ENCODE measurements at regions of chr11 and their contacts with region 1.

Region 1: GRCh38 chr11:9861860-9862725 is 198.2 kb downstream of the SWAP70 start:
- DNase-seq: peak; percentile 74
- H3K4me3 ChIP-seq: no peak overlapping the region
- H3K27ac ChIP-seq: no peak overlapping the region
- H3K4me1 ChIP-seq: peaks cover 40% of the 10 kb centered on the region
- H3K27me3 ChIP-seq: no peaks in the 10 kb centered on the region
- CTCF ChIP-seq: peak; percentile 66 to 74
- POLR2A ChIP-seq: no peak

Region 2: DNA sequence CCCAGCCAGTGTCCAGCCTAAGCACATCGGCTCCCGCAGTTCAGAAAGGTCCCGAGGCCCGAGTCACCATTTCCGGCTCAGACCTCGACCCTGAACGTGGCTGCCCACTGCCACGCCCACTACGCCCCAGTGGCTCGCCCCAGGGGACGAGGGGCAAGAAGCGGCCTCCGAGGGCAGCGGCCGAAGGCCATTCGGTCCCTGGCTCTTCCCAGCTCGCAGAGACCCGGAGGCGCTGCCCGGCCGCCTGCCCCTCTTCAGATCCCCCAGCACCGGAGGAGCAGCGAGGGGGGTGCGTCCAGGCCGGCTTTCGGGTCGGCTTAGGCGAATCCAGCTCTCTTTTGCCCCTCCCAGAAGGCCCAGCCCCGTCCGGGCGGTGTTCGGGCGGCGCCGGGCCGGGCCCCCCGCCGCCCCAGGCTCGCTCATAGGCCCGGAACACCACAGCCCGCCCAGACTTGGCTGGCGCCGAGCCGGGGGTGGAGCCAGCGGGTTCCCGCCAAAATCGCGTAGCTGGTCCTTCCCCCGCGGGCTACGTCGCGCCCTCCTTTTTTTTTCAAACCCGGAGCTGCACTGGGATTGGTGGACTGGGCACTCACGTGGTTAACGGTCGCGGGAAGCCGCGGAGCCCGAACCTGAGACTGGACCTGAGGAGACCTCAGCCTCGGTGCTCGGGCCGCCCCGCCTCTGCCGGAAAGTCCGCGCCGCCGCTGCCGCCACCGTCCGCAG is 288.9 kb before region 1 on chr11 and contains the start of gene WEE1:
- CTCF ChIA-PET with region 1: no interaction called
- POLR2A ChIA-PET with region 1: no interaction called
- dilution Hi-C with region 1: no loop called
- intact Hi-C with region 1: loop called (anchors 10 kb)
- DNase-seq: peak; percentile 99
- H3K4me3 ChIP-seq: peak within 1 kb of the TSS; percentile 56 to 97 (median 63)
- H3K27ac ChIP-seq: peak within 1 kb of the TSS; percentile 83
- H3K4me1 ChIP-seq: peaks cover 34% of the 10 kb centered on the region
- H3K27me3 ChIP-seq: no peaks in the 10 kb centered on the region
- CTCF ChIP-seq: no peak
- POLR2A ChIP-seq: peak; percentile 50
- total RNA-seq, gene WEE1: 42.8 and 47.0 TPM in 2 replicates

Region 3: GRCh38 chr11:9875399-9875798 is 13.3 kb after region 1 on chr11:
- CTCF ChIA-PET with region 1: interaction called, 13 read pairs
- POLR2A ChIA-PET with region 1: no interaction called
- dilution Hi-C with region 1: no loop called
- intact Hi-C with region 1: no loop called
- DNase-seq: no peak
- H3K4me3 ChIP-seq: no peak overlapping the region
- H3K27ac ChIP-seq: no peak overlapping the region
- H3K4me1 ChIP-seq: no peaks in the 10 kb centered on the region
- H3K27me3 ChIP-seq: no peaks in the 10 kb centered on the region
- CTCF ChIP-seq: no peak
- POLR2A ChIP-seq: no peak

Region 4: DNA sequence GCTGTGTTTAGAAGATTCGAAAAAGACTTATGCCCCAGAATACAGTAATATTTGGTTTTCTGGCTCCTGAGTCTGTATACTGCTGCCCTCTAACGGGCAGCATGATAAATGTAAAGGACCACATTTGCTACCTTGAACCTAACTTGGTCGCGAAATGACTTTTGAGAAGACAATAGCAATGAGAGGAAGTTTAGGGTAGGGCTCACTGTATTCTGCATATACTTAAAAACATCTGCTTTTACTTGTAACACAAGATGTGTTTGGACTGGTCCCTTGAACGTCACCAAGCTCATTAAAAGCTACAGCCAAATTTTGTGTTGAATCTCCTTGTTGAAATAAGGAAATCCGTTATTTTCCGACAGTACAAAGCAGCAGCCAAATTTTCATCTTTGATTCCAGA is 110.9 kb after region 1 on chr11:
- CTCF ChIA-PET with region 1: interaction called, 30 read pairs
- POLR2A ChIA-PET with region 1: no interaction called
- dilution Hi-C with region 1: no loop called
- intact Hi-C with region 1: loop called (anchors 1 kb)
- DNase-seq: peak; percentile 74
- H3K4me3 ChIP-seq: no peak overlapping the region
- H3K27ac ChIP-seq: no peak overlapping the region
- H3K4me1 ChIP-seq: peaks cover 14% of the 10 kb centered on the region
- H3K27me3 ChIP-seq: no peaks in the 10 kb centered on the region
- CTCF ChIP-seq: peak; percentile 58 to 61
- POLR2A ChIP-seq: no peak

Region 5: GRCh38 chr11:10076458-10077141 is 214.5 kb after region 1 on chr11:
- CTCF ChIA-PET with region 1: interaction called, 3 read pairs
- POLR2A ChIA-PET with region 1: no interaction called
- dilution Hi-C with region 1: no loop called
- intact Hi-C with region 1: loop called (anchors 1 kb)
- DNase-seq: peak; percentile 28
- H3K4me3 ChIP-seq: no peak overlapping the region
- H3K27ac ChIP-seq: no peak overlapping the region
- H3K4me1 ChIP-seq: no peaks in the 10 kb centered on the region
- H3K27me3 ChIP-seq: no peaks in the 10 kb centered on the region
- CTCF ChIP-seq: peak; percentile 51 to 84
- POLR2A ChIP-seq: no peak

Region 6: GRCh38 chr11:10208131-10208575 is 346.1 kb after region 1 on chr11:
- CTCF ChIA-PET with region 1: no interaction called
- POLR2A ChIA-PET with region 1: no interaction called
- dilution Hi-C with region 1: no loop called
- intact Hi-C with region 1: loop called (anchors 10 kb)
- DNase-seq: peak; percentile 73
- H3K4me3 ChIP-seq: no peak overlapping the region
- H3K27ac ChIP-seq: no peak overlapping the region
- H3K4me1 ChIP-seq: no peaks in the 10 kb centered on the region
- H3K27me3 ChIP-seq: no peaks in the 10 kb centered on the region
- CTCF ChIP-seq: peak; percentile 39 to 41
- POLR2A ChIP-seq: no peak

Measured in endothelial cell of umbilical vein (primary cell).